A549 (cell line): ENCODE measurements at regions of chr17 and their contacts with region 1.

Region 1: GRCh38 chr17:30104575-30105339 is 11.9 kb upstream of the NSRP1 start:
- DNase-seq: peak; percentile 81 to 82
- ATAC-seq: peak; percentile 97 to 99
- H3K4me3 ChIP-seq: peak overlapping the region; percentile 42
- H3K27ac ChIP-seq: peak overlapping the region; percentile 49 to 76
- H3K4me1 ChIP-seq: 0 out of 3 replicates have a peak, but pooled peaks cover 5% of the 10 kb centered on the region
- CTCF ChIP-seq: peak; percentile 99
- EP300 ChIP-seq: no peak
- POLR2A ChIP-seq: no peak
- RAD21 ChIP-seq: peak; percentile 91 to 92

Region 2: DNA sequence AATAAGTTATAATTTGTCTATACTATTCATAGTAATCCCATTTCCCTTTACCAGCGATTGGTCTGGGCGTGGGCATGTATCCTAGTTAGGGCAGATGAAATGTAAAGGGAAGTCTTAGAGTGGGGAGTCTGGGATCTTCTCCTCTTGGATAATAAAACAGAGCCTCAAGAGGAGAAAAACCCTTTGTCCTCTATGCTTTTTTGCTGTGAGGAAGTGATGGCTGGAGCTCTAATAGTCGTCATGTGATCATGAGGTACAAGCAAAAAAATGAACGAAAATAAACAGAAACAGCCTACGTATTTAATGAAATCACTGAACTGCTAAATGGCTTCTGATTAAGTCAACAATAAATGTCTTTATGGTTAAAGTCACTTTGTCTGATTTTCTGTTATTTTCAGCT is 136.5 kb before region 1 on chr17:
- CTCF ChIA-PET with region 1: no interaction called
- POLR2A ChIA-PET with region 1: no interaction called
- DNase-seq: no peak
- ATAC-seq: no peak
- H3K4me3 ChIP-seq: no peak overlapping the region
- H3K27ac ChIP-seq: no peak overlapping the region
- H3K4me1 ChIP-seq: no peaks in the 10 kb centered on the region
- CTCF ChIP-seq: no peak
- EP300 ChIP-seq: no peak
- POLR2A ChIP-seq: no peak
- RAD21 ChIP-seq: no peak

Region 3: DNA sequence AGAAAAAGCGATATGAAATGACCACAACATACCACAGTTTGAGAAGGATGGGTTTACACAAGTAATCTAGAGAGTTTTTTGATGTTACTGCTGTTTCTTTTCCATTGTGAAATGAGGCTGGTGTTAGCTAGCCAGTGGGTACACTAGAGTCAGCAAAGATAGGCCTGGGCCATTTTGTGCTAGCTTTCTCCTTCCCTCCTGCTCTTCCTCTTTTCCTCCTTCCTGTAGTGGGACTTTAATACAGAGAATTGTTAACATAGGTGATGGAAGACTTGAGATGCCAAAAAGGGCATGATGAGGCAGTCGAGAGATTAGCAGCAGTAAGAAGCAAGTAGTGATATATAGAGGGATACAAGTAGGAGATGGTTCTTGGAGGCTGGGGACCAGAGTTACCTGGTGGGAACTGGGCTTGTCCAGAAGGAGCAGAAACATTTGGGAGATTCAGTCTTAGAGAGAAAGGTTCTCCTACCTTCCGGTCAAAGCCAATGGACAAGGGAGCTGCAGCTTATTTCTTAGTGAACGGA is 19.6 kb after region 1 on chr17:
- CTCF ChIA-PET with region 1: interaction called, 63 read pairs
- POLR2A ChIA-PET with region 1: interaction called, 3 read pairs
- DNase-seq: no peak
- ATAC-seq: peak in 1 of 2 experiments; percentile 55; a peak in 3 of 6 replicates
- H3K4me3 ChIP-seq: no peak overlapping the region
- H3K27ac ChIP-seq: no peak overlapping the region
- H3K4me1 ChIP-seq: peaks cover 13% of the 10 kb centered on the region; the same call in 2 of the 3 replicates
- CTCF ChIP-seq: no peak
- EP300 ChIP-seq: no peak
- POLR2A ChIP-seq: no peak
- RAD21 ChIP-seq: no peak

Region 4: GRCh38 chr17:30236766-30237165 is 132.0 kb after region 1 on chr17:
- CTCF ChIA-PET with region 1: interaction called, 115 read pairs
- POLR2A ChIA-PET with region 1: interaction called, 3 read pairs
- DNase-seq: peak; percentile 70 to 91
- ATAC-seq: peak; percentile 82 to 91
- H3K4me3 ChIP-seq: peak overlapping the region; percentile 57; the same call in 2 of the 3 replicates
- H3K27ac ChIP-seq: peak overlapping the region in 1 of 2 experiments; percentile 48; a peak in 1 of 6 replicates
- H3K4me1 ChIP-seq: peaks cover 13% of the 10 kb centered on the region
- CTCF ChIP-seq: peak; percentile 64
- EP300 ChIP-seq: no peak
- POLR2A ChIP-seq: no peak
- RAD21 ChIP-seq: peak; percentile 75 to 82

Region 5: GRCh38 chr17:30291543-30292285 is 187.0 kb after region 1 on chr17 and contains the start of gene BLMH:
- CTCF ChIA-PET with region 1: interaction called, 21 read pairs
- POLR2A ChIA-PET with region 1: interaction called, 5 read pairs
- DNase-seq: peak; percentile 79 to 80
- ATAC-seq: peak; percentile 86 to 93
- H3K4me3 ChIP-seq: peak within 1 kb of the TSS; percentile 80
- H3K27ac ChIP-seq: peak within 1 kb of the TSS; percentile 82 to 92
- H3K4me1 ChIP-seq: peaks cover 10% of the 10 kb centered on the region
- CTCF ChIP-seq: no peak
- EP300 ChIP-seq: no peak
- POLR2A ChIP-seq: peak; percentile 86
- RAD21 ChIP-seq: peak in 1 of 2 experiments; percentile 14; a peak in 1 of 5 replicates
- polyA plus RNA-seq, gene BLMH: 36.4 and 38.5 TPM in 2 replicates

Region 6: DNA sequence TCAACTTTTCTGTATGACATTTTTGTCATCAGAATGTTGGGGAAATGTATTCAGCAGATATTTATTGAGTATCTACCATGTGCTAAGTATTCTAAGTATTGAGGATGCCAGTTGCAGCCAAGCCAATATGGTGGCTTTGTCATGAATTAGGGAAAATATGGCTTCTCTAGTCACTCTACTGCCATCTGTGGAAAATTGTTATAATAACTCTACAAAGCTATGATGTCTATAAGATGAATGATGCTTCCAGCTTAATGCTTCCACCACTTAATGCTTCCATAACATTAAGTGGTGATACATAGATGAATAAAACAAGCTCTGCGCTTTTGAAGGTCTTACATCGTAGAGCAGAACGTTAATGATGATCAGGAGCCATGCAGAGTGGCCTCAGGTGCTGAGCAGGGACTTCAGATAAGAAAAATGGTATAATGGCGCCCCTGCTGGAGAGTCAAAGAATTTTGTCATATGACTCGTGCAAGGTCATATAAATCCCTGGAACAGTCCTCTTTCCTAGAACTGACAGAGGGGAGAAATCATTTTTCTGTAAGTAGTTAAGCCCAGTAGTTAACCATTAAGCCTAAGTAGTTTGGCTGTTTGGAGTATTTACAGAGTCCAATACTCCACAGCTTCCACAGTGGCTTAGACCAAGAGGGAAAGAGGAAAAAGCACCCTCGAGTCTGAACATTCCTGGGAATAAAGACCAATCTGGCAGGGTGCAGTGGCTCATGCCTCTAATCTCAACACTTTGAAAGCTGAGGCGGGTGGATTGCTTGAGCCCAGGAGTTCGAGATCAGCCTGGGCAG is 231.8 kb after region 1 on chr17:
- CTCF ChIA-PET with region 1: interaction called, 98 read pairs
- POLR2A ChIA-PET with region 1: interaction called, 4 read pairs
- DNase-seq: peak; percentile 66 to 88
- ATAC-seq: peak; percentile 78 to 82
- H3K4me3 ChIP-seq: no peak overlapping the region
- H3K27ac ChIP-seq: peak overlapping the region; percentile 3 to 36; a peak in 3 of 6 replicates
- H3K4me1 ChIP-seq: peaks cover 38% of the 10 kb centered on the region
- CTCF ChIP-seq: peak; percentile 99
- EP300 ChIP-seq: no peak
- POLR2A ChIP-seq: no peak
- RAD21 ChIP-seq: peak; percentile 87 to 94